Naive thymus-derived CD4-positive, alpha-beta T cell (primary cell): ENCODE measurements at regions of chr19 and their contacts with region 1.

Region 1: DNA sequence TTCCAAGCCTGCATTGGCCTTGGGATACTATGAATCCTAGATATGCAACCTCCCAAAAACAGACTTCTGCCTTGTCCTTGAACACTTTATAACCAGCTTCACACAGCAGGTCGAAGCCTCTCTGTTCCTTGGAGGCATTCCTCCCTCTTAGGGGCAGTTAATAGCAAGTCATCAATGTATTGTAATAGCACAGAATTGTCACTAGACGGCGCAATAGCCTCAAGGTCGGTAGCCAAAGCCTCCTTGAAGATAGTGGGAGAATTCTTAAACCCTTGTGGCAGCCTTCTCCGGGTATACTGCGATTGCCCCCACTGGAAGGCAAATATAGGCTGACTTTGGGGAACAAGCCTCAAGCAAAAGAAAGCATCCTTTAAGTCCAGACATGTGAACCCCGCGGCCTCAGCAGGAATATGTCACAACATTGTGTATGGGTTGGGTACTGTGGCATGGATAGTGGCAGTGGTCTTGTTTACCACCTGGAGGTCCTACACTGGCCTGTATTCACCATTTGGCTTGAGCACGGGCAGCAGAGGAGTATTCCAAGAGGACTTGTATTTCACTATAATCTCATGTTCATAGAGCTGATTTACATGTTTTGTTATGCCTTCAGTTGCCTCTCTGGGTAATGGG is 61.1 kb downstream of the ZNF431 start:
- DNase-seq: peak in 6 of 9 donors; percentile 13 to 52 (median 36)
- ATAC-seq: peak; percentile 73
- H3K4me3 ChIP-seq: no peak overlapping the region
- H3K4me3 Mint-ChIP-seq: no peak overlapping the region
- H3K27ac ChIP-seq: no peak overlapping the region
- H3K27ac Mint-ChIP-seq: no peak overlapping the region
- H3K4me1 ChIP-seq: no peaks in the 10 kb centered on the region
- H3K4me1 Mint-ChIP-seq: no peaks in the 10 kb centered on the region
- H3K27me3 ChIP-seq: no peaks in the 10 kb centered on the region
- H3K27me3 Mint-ChIP-seq: peaks cover 0 to 18% (median 13%) of the 10 kb centered on the region in 5 donors

Region 2: DNA sequence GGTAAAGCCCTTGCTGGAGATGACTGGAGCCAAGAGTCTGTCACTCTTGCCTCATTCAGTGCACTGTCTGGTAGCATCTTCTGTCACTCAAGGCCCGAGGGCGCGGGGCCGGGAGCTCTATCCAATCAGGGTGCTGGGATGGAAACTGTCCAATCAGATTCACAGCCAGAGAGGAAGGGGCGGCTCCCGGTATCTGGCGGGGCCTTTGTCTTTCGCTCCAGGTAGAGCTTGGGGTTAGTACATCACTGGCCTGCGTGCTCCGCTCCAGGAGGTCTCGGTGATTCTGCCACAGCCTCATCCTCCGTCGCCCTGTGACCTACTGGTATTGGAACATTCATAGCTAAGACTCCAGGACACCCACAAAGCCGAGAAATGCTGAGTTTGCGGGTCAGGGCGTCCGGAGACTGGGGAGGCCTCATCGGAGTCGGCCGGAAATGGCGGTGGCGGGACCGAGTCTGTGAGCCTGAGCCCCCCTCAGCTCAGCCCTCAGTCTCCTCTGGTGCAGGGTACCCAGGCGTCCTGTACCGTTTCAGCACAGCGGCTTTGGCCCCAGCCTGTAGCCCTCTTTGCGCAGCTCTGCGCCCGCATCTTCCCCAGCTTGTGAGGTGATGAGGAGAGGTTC is 203.1 kb before region 1 on chr19:
- CTCF ChIA-PET with region 1: no interaction called
- POLR2A ChIA-PET with region 1: no interaction called
- intact Hi-C with region 1: no loop called
- DNase-seq: peak; percentile 64 to 92 (median 86)
- ATAC-seq: peak; percentile 100
- H3K4me3 ChIP-seq: peak overlapping the region; percentile 67
- H3K4me3 Mint-ChIP-seq: peak overlapping the region; percentile 76 to 92 (median 85)
- H3K27ac ChIP-seq: no peak overlapping the region
- H3K27ac Mint-ChIP-seq: peak overlapping the region in 5 of 9 donors; percentile 36 to 87 (median 47)
- H3K4me1 ChIP-seq: no peaks in the 10 kb centered on the region
- H3K4me1 Mint-ChIP-seq: peaks cover 5 to 16% (median 7%) of the 10 kb centered on the region in 7 donors
- H3K27me3 ChIP-seq: no peaks in the 10 kb centered on the region
- H3K27me3 Mint-ChIP-seq: no peaks in the 10 kb centered on the region

Region 3: DNA sequence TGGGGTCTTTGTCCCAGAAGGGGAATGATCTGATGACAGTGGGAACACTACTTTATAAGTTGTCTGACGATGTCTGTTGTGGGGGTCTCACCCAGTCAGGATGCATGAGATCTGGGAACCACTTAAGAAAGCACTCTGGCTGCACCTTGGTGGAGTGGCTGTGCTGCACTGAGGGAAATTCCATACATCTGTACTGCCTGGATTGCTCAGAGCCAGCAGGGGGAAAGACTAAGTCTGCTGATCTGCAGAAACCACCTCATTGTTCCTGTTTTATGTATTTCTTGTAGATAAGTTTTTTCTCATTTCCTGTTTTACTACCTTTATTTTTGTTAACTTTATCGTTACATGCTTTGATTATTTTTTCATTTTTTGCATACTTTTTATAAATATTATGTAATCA is 155.3 kb before region 1 on chr19:
- CTCF ChIA-PET with region 1: no interaction called
- POLR2A ChIA-PET with region 1: no interaction called
- intact Hi-C with region 1: no loop called
- DNase-seq: no peak
- ATAC-seq: no peak
- H3K4me3 ChIP-seq: no peak overlapping the region
- H3K4me3 Mint-ChIP-seq: peak overlapping the region in 3 of 10 donors; percentile 1 to 27 (median 16)
- H3K27ac ChIP-seq: no peak overlapping the region
- H3K27ac Mint-ChIP-seq: peak overlapping the region in 1 of 9 donors; percentile 38
- H3K4me1 ChIP-seq: no peaks in the 10 kb centered on the region
- H3K4me1 Mint-ChIP-seq: peaks cover 0 to 34% (median 23%) of the 10 kb centered on the region in 7 donors
- H3K27me3 ChIP-seq: no peaks in the 10 kb centered on the region
- H3K27me3 Mint-ChIP-seq: no peaks in the 10 kb centered on the region

Region 4: GRCh38 chr19:21221693-21222092 is 18.7 kb after region 1 on chr19:
- CTCF ChIA-PET with region 1: no interaction called
- POLR2A ChIA-PET with region 1: no interaction called
- intact Hi-C with region 1: no loop called
- DNase-seq: no peak
- ATAC-seq: no peak
- H3K4me3 ChIP-seq: no peak overlapping the region
- H3K4me3 Mint-ChIP-seq: no peak overlapping the region
- H3K27ac ChIP-seq: no peak overlapping the region
- H3K27ac Mint-ChIP-seq: no peak overlapping the region
- H3K4me1 ChIP-seq: no peaks in the 10 kb centered on the region
- H3K4me1 Mint-ChIP-seq: no peaks in the 10 kb centered on the region
- H3K27me3 ChIP-seq: no peaks in the 10 kb centered on the region
- H3K27me3 Mint-ChIP-seq: peaks cover 0 to 27% (median 12%) of the 10 kb centered on the region in 5 donors

Region 5: DNA sequence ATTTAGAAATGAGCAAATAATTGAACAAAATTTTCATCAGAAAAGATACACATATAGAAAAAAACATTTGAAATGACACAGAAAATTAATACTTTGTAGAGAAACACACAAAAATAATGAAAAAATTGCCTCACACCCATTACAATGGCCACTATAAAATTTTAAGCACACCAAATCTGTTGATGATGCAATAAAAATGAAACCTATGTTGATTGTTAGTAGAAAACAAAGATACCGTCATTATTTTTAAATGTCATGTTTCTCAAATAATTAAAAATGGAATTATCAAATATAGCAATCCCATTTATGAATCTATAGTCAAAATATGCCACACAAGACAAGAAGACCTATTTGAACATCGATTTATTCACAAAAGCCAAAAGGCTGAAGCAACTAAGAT is 35.7 kb after region 1 on chr19:
- CTCF ChIA-PET with region 1: no interaction called
- POLR2A ChIA-PET with region 1: no interaction called
- intact Hi-C with region 1: no loop called
- DNase-seq: no peak
- ATAC-seq: no peak
- H3K4me3 ChIP-seq: no peak overlapping the region
- H3K4me3 Mint-ChIP-seq: no peak overlapping the region
- H3K27ac ChIP-seq: no peak overlapping the region
- H3K27ac Mint-ChIP-seq: no peak overlapping the region
- H3K4me1 ChIP-seq: no peaks in the 10 kb centered on the region
- H3K4me1 Mint-ChIP-seq: no peaks in the 10 kb centered on the region
- H3K27me3 ChIP-seq: no peaks in the 10 kb centered on the region
- H3K27me3 Mint-ChIP-seq: peaks cover 0 to 4% (median 0%) of the 10 kb centered on the region in 5 donors

Region 6: DNA sequence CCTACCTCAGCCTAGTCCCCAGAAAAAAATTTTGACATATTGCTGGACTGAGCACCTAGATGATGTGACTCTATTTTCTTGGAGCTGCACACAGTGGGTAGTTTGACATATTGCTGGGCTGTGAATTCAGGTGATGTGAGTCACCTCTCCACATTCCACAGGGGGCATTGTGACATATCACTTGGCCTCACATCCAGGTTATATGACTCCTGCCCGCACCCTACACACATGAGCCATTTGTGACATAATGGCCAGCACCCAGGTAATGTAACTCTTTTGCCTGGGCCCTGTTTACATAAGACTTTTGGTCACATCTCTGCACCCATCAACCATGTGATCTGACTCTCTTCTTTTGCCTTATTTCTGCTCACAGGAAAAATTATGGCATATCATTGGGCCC is 688.1 kb after region 1 on chr19:
- CTCF ChIA-PET with region 1: no interaction called
- POLR2A ChIA-PET with region 1: no interaction called
- intact Hi-C with region 1: loop called in 1 of 2 experiments (anchors 10 kb)
- DNase-seq: no peak
- ATAC-seq: no peak
- H3K4me3 ChIP-seq: no peak overlapping the region
- H3K4me3 Mint-ChIP-seq: no peak overlapping the region
- H3K27ac ChIP-seq: no peak overlapping the region
- H3K27ac Mint-ChIP-seq: no peak overlapping the region
- H3K4me1 ChIP-seq: no peaks in the 10 kb centered on the region
- H3K4me1 Mint-ChIP-seq: peaks cover 0 to 3% (median 0%) of the 10 kb centered on the region in 7 donors
- H3K27me3 ChIP-seq: no peaks in the 10 kb centered on the region
- H3K27me3 Mint-ChIP-seq: no peaks in the 10 kb centered on the region